Heart right ventricle (tissue), 16 donors: ENCODE measurements at regions of chr10 and their contacts with region 1.

Region 1: DNA sequence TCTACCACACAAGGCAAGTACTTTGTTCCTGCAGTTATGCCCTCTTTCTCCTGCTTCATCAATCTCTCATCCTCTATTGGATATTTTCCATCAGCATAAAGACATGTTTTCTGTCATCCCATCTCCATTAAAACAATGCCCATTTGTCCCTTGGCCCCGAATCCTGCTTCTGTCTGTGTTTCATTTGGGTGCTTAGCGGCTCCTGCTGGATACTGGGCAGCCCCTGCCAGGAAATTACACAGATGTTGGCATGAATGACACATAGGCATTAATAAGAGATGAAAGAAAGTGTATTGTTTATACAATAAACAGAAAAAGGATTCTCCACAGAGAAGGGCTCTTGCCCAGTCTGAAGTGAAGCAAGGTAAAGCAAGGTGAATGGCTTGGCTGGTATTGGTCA is 765.3 kb downstream of the REEP3 start:
- DNase-seq: no peak
- ATAC-seq: no peak
- H3K4me3 ChIP-seq: no peak overlapping the region
- H3K27ac ChIP-seq: no peak overlapping the region
- H3K4me1 ChIP-seq: no peaks in the 10 kb centered on the region
- H3K27me3 ChIP-seq: no peaks in the 10 kb centered on the region
- CTCF ChIP-seq: no peak

Region 2: DNA sequence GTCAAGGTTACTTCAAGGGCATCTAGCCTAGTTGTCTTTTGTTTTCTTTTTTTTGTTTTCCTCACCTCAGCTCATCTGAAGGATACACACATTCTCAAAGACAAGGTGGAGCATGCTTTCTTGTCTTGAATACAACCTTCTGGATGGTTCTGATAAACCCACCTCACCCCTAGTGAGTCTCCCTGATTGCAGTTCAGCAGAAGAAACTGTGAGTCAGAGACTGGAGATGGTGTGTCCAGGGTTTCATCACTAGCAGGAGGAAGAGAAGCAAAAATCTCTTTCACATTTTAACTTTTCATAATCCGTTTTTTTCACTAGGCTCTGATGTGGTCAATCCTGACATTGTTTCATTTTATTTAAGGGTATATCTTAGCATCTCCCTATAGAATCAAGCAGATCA is 1296.4 kb before region 1 on chr10:
- intact Hi-C with region 1: no loop called
- DNase-seq: no peak
- ATAC-seq: no peak
- H3K4me3 ChIP-seq: no peak overlapping the region
- H3K27ac ChIP-seq: no peak overlapping the region
- H3K4me1 ChIP-seq: peaks cover 0 to 19% (median 3%) of the 10 kb centered on the region in 9 donors
- H3K27me3 ChIP-seq: peaks cover 0 to 16% (median 0%) of the 10 kb centered on the region in 7 donors
- CTCF ChIP-seq: no peak

Region 3: DNA sequence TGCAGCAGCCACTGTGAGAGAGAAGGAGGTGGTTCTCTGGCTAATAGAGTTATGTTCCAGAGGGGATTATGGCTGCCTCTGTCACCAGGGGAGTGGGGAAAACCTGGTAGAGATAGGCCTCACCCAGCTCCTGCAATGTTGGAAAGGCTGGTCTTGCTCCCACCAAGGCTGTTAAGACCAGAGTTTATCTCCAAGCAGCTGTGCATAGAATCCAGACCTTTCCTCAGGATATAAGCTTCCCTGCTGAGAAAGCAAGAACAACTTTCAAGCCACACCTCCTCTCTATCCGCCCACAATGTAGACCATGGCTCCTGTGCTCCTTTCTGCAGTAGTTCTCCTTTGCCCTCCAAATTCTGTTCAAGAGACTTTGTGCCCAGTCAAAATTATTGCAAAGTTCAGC is 610.0 kb after region 1 on chr10:
- intact Hi-C with region 1: loop called in 1 of 10 experiments (anchors 5 kb)
- DNase-seq: no peak
- ATAC-seq: no peak
- H3K4me3 ChIP-seq: no peak overlapping the region
- H3K27ac ChIP-seq: no peak overlapping the region
- H3K4me1 ChIP-seq: no peaks in the 10 kb centered on the region
- H3K27me3 ChIP-seq: no peaks in the 10 kb centered on the region
- CTCF ChIP-seq: no peak